Activated B cell treated with CpG ODN at 0.5 μM for 24 hours (primary cell): ENCODE measurements at regions of chr14 and their contacts with region 1.

Region 1: DNA sequence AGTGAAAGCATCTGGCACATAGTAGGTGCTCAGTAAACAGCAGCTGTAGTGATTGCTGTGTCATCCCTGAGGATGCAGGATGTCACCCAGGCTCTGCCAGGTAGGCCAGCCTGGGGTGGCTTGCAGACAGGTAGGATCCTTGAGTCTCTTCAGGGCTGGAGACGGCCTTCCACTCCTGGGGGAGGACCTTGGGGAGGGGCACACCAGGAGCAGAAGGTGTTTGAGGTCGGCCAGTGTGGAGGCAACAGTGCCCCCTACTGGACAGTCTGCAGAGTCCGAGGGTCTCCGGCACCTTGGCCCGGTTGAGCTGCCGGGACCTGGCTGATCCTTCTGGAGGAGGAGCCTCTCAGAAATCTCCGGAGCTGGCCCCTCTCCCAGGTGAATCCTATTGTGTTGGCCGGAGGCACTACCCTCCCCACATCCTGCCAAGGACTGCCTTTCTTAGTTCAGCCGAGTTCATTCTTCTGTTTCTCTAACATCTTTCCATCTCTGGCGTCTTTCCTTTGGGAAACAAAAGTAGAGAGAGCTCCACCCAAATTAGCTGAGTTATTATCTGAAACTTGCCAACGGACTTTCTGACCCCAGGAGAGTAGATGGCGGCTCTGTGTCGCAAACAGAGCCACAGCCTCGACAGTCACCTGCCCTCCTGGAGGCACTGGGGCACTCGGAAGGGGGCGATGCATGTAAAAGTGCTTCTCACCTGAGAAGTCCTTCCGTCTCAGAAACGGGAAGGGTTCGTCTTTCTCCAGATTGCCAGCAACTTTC is 41.8 kb upstream of the CLMN start:
- DNase-seq: peak; percentile 50
- ATAC-seq: peak; percentile 84
- H3K4me3 Mint-ChIP-seq: peak overlapping the region; percentile 15
- H3K27ac Mint-ChIP-seq: no peak overlapping the region
- H3K4me1 Mint-ChIP-seq: peaks cover 10% of the 10 kb centered on the region
- H3K27me3 Mint-ChIP-seq: peaks cover 50% of the 10 kb centered on the region
- CTCF ChIP-seq: no peak

Region 2: DNA sequence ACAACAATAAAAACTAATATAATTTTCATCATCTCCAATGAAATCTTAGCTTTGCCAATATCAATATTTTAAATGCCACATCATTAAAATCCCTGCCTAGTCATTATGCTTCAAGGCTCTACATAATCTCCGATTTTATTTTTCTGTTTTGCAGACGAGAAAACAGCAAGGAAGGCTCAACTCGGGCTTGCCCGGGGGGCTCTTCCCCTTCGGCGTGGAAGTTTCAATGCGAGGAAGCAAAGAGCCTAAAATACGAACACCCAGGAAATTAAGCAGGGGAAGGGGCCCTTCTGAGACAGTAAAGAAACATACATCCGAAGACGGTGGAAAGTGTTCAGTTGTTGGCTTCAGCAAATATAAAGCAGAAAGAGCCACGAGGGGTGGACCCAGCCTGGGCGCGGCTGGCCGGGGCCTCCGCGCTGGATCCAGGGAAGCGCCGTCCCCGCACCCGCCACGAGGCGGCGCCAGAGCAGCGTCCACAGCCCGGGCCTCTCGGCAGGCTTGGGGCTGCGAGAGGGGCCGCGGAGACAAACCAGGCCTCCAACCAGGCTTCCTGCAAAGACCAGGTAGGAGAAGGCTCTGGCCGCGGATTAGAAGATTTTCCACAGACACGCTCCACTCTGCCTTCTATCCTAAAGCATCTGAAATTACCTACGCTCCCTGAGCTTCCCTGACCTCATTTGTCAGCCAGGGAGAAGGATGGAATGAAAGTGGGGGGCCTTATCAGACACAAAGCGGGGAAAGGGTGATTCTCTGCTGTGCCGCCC is 672.2 kb before region 1 on chr14:
- CTCF ChIA-PET with region 1: no interaction called
- POLR2A ChIA-PET with region 1: no interaction called
- intact Hi-C with region 1: loop called (anchors 2 kb)
- DNase-seq: peak; percentile 35
- ATAC-seq: peak; percentile 49
- H3K4me3 Mint-ChIP-seq: no peak overlapping the region
- H3K27ac Mint-ChIP-seq: no peak overlapping the region
- H3K4me1 Mint-ChIP-seq: no peaks in the 10 kb centered on the region
- H3K27me3 Mint-ChIP-seq: peaks cover 14% of the 10 kb centered on the region
- CTCF ChIP-seq: no peak

Region 3: DNA sequence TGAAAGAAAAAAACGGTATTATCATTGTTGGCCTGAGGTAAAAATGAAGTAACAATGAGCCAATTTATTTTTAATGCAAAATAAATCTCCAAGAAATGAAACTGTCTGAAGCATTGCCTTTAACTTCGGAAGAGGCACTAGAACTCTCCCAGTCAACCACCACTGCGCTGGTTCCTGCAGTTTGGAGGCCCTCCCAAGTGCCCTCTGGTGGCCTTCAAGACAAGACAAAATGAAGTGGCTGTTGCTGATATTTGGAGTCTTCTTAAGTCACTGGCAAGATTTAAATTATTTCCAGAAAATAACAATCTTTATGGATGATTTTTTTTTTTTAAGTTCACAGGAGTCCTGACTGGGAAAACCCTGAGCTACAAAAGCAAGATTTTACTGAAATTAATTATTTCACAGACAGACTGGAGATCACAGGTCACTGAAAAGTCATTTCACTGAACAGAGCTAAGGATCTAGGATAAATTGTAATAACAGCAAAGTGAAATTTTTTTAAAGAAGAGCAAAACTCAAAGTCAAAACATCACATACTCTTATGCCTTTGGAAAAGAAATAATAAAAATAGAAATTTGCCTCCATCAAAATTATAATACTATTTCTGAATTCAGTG is 262.5 kb before region 1 on chr14:
- CTCF ChIA-PET with region 1: interaction called, 4 read pairs
- POLR2A ChIA-PET with region 1: no interaction called
- intact Hi-C with region 1: loop called (anchors 1 kb)
- DNase-seq: no peak
- ATAC-seq: peak; percentile 56
- H3K4me3 Mint-ChIP-seq: no peak overlapping the region
- H3K27ac Mint-ChIP-seq: no peak overlapping the region
- H3K4me1 Mint-ChIP-seq: peaks cover 4% of the 10 kb centered on the region
- H3K27me3 Mint-ChIP-seq: no peaks in the 10 kb centered on the region
- CTCF ChIP-seq: no peak

Region 4: DNA sequence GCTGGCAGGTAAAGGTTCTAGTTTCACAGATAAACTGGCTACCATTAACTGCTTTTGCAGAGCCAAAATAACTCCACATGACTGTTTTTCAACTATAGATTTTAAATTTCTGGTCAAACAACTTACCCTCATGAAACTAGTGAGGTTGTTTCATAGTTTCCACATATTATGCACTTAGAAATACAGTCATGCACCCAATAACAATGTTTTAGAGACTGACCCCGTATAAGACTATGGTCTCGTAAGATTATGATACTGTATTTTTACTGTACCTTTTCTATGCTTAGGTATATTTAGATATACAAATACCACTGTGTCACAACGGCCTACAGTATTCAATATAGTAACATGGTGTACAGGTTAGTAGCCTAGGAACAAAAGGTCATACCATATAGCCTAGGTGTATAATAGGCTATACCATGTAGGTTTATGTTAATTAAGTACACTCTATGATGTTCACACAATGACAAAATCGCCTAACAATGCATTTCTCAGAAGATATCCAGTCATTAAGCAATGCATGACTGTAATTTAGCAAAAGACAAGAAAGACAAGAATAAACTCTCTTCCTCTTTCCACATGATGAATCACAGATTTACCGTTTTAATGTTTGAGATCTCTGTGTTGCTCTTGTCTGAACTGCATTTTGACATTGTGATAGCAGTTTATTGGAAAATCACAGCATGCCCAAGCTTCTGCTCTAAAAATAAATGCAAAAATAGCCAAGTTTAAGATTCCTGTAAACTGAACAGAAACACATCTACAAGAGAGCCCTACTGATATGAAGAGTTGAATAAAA is 221.3 kb before region 1 on chr14:
- CTCF ChIA-PET with region 1: no interaction called
- POLR2A ChIA-PET with region 1: no interaction called
- intact Hi-C with region 1: loop called (anchors 5 kb)
- DNase-seq: no peak
- ATAC-seq: peak; percentile 52
- H3K4me3 Mint-ChIP-seq: peak overlapping the region; percentile 64
- H3K27ac Mint-ChIP-seq: peak overlapping the region; percentile 78
- H3K4me1 Mint-ChIP-seq: peaks cover 79% of the 10 kb centered on the region
- H3K27me3 Mint-ChIP-seq: no peaks in the 10 kb centered on the region
- CTCF ChIP-seq: no peak

Region 5: GRCh38 chr14:95327558-95328374 is 33.8 kb before region 1 on chr14:
- CTCF ChIA-PET with region 1: interaction called, 3 read pairs
- POLR2A ChIA-PET with region 1: no interaction called
- intact Hi-C with region 1: loop called (anchors 1 kb)
- DNase-seq: peak; percentile 48
- ATAC-seq: peak; percentile 84
- H3K4me3 Mint-ChIP-seq: peak overlapping the region; percentile 76
- H3K27ac Mint-ChIP-seq: peak overlapping the region; percentile 97
- H3K4me1 Mint-ChIP-seq: peaks cover 53% of the 10 kb centered on the region
- H3K27me3 Mint-ChIP-seq: no peaks in the 10 kb centered on the region
- CTCF ChIP-seq: no peak